Caco-2 (cell line): ENCODE measurements at regions of chr15 and their contacts with region 1.

Region 1: GRCh38 chr15:70097337-70098169 is at the start of gene TLE3:
- DNase-seq: peak; percentile 97 to 98
- H3K4me3 ChIP-seq: peak within 1 kb of the TSS; percentile 89
- H3K4me3 Mint-ChIP-seq: peak within 1 kb of the TSS; percentile 98
- H3K27ac Mint-ChIP-seq: peak within 1 kb of the TSS; percentile 99
- H3K4me1 ChIP-seq: peaks cover 40% of the 10 kb centered on the region
- H3K4me1 Mint-ChIP-seq: peaks cover 19% of the 10 kb centered on the region
- H3K27me3 ChIP-seq: no peaks in the 10 kb centered on the region
- H3K27me3 Mint-ChIP-seq: no peaks in the 10 kb centered on the region
- CTCF ChIP-seq: no peak
- total RNA-seq, gene TLE3: 96.0 and 105 TPM in 2 replicates

Region 2: GRCh38 chr15:69468241-69469121 is 629.1 kb before region 1 on chr15:
- CTCF ChIA-PET with region 1: interaction called, 5 read pairs
- POLR2A ChIA-PET with region 1: interaction called, 4 read pairs
- intact Hi-C with region 1: loop called (anchors 5 kb)
- DNase-seq: peak in 1 of 2 experiments; percentile 47
- H3K4me3 ChIP-seq: no peak overlapping the region
- H3K4me3 Mint-ChIP-seq: peak overlapping the region; percentile 48
- H3K27ac Mint-ChIP-seq: peak overlapping the region; percentile 67
- H3K4me1 ChIP-seq: peaks cover 47% of the 10 kb centered on the region
- H3K4me1 Mint-ChIP-seq: peaks cover 26% of the 10 kb centered on the region
- H3K27me3 ChIP-seq: no peaks in the 10 kb centered on the region
- H3K27me3 Mint-ChIP-seq: no peaks in the 10 kb centered on the region
- CTCF ChIP-seq: no peak

Region 3: GRCh38 chr15:70066447-70066846 is 31.1 kb before region 1 on chr15:
- CTCF ChIA-PET with region 1: interaction called, 4 read pairs
- POLR2A ChIA-PET with region 1: interaction called, 18 read pairs
- intact Hi-C with region 1: no loop called
- DNase-seq: no peak
- H3K4me3 ChIP-seq: no peak overlapping the region
- H3K4me3 Mint-ChIP-seq: no peak overlapping the region
- H3K27ac Mint-ChIP-seq: no peak overlapping the region
- H3K4me1 ChIP-seq: no peaks in the 10 kb centered on the region
- H3K4me1 Mint-ChIP-seq: no peaks in the 10 kb centered on the region
- H3K27me3 ChIP-seq: no peaks in the 10 kb centered on the region
- H3K27me3 Mint-ChIP-seq: no peaks in the 10 kb centered on the region
- CTCF ChIP-seq: no peak

Region 4: DNA sequence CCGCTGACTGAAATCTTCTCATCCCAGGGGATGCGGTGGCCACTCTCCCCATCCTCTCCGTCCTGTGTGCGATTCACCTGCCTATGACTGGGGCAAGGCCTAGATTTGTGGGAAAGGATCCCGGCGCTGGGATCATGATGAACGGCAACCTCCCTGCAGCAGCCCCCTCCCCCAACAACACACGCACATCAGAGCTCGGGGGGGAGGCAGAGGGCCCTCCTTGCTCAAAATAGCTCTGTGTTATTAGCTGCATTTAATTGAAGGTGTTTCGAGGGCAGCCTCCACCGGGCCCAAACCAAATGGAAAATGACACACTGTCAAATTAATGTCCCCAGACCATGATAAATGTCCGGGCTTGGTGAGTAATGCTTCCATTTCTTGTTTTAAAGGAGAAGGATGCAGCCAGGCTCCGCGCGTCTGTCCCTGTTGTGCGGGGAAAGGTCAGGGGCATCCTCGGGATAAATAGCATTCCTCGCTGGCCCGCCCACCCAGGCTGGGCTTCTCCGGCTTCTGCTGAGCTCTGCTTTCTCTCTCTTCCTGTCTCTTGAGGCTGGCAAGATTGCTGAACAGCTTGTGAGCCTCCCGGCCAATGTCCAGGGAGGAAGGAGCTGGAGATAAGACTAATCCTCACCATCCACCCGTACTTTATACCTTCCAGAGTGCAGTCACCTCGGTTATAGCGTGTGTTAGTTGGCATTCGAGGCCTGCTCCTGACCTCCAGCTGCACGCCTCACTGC is 56.6 kb after region 1 on chr15:
- CTCF ChIA-PET with region 1: interaction called, 11 read pairs
- POLR2A ChIA-PET with region 1: interaction called, 4 read pairs
- intact Hi-C with region 1: no loop called
- DNase-seq: peak; percentile 64 to 85
- H3K4me3 ChIP-seq: no peak overlapping the region
- H3K4me3 Mint-ChIP-seq: peak overlapping the region; percentile 35
- H3K27ac Mint-ChIP-seq: peak overlapping the region; percentile 24
- H3K4me1 ChIP-seq: peaks cover 19% of the 10 kb centered on the region
- H3K4me1 Mint-ChIP-seq: peaks cover 46% of the 10 kb centered on the region
- H3K27me3 ChIP-seq: no peaks in the 10 kb centered on the region
- H3K27me3 Mint-ChIP-seq: no peaks in the 10 kb centered on the region
- CTCF ChIP-seq: no peak

Region 5: DNA sequence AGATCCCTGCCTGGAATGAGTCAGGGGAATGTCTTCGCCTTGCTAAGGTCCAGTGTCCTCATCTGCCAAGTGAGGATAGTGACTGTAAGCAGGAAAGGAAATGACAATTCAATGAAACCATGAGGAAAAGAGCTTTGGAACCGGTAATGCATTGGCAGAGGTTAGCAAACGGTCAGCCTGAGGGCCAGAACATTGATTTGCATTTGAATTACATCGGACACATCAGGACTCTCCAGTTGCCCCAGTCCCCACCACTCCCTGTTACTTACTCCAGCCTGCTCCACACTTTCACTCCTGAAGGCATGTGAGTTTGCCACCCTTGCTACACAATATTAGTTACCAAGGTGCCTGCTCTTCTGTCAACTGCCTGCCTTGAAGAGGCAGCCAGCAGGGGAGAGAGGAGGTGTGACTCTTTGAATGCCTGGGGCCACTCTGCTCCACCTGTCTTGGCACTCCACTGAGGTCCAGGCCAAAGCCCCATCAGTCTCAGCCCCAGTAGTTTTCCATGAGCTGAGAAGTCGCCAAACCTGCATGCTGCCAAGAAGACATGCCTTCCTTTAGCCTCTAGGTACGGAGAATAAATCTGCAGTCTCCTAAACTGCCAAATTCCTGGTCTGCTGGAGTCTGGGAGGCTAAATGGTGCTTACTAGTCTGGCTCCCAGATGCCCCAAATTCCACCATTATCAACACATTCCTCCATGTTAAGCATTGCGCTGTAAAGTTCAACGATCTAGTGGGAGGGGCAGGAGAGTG is 191.8 kb after region 1 on chr15:
- CTCF ChIA-PET with region 1: no interaction called
- POLR2A ChIA-PET with region 1: interaction called, 3 read pairs
- intact Hi-C with region 1: loop called (anchors 5 kb)
- DNase-seq: peak; percentile 77 to 80
- H3K4me3 ChIP-seq: no peak overlapping the region
- H3K4me3 Mint-ChIP-seq: peak overlapping the region; percentile 67
- H3K27ac Mint-ChIP-seq: peak overlapping the region; percentile 96
- H3K4me1 ChIP-seq: peaks cover 40% of the 10 kb centered on the region
- H3K4me1 Mint-ChIP-seq: peaks cover 41% of the 10 kb centered on the region
- H3K27me3 ChIP-seq: no peaks in the 10 kb centered on the region
- H3K27me3 Mint-ChIP-seq: no peaks in the 10 kb centered on the region
- CTCF ChIP-seq: no peak

Region 6: DNA sequence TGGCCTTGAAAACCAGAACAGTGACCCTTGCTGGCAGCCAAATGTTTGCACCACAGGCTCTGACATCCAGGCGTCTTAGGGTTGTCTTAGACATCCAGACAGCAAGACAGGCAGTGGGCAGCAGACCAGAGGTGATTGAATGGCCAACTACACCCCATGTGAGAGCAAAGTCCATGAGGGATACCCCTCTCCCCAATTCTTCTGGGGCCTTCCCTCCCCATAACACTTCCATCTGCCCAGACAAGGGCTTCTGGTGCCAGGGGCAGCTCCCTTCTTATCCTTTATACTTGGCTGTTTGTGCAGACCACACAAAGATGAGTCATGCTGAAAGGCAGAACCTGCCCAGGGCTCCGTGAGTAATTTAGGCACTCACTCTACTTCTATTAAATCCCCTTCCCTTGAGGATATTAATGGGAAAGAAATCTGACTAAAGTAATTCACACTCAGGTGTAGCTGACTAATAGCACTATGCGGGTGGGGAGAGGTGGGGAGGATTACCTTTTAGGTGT is 407.9 kb after region 1 on chr15:
- CTCF ChIA-PET with region 1: no interaction called
- POLR2A ChIA-PET with region 1: interaction called, 14 read pairs
- intact Hi-C with region 1: no loop called
- DNase-seq: no peak
- H3K4me3 ChIP-seq: no peak overlapping the region
- H3K4me3 Mint-ChIP-seq: no peak overlapping the region
- H3K27ac Mint-ChIP-seq: peak overlapping the region; percentile 70
- H3K4me1 ChIP-seq: peaks cover 53% of the 10 kb centered on the region
- H3K4me1 Mint-ChIP-seq: peaks cover 30% of the 10 kb centered on the region
- H3K27me3 ChIP-seq: no peaks in the 10 kb centered on the region
- H3K27me3 Mint-ChIP-seq: no peaks in the 10 kb centered on the region
- CTCF ChIP-seq: no peak